Mammary epithelial cell (primary cell): ENCODE measurements at regions of chr19 and their contacts with region 1.

Region 1: GRCh38 chr19:1720237-1720636 is 33.1 kb upstream of the ONECUT3 start:
- DNase-seq: no peak
- H3K4me3 ChIP-seq: no peak overlapping the region
- H3K27ac ChIP-seq: no peak overlapping the region
- H3K4me1 ChIP-seq: peaks cover 4% of the 10 kb centered on the region
- H3K27me3 ChIP-seq: peaks cover 4% of the 10 kb centered on the region
- CTCF ChIP-seq: no peak

Region 2: GRCh38 chr19:1632462-1633268 is 87.6 kb before region 1 on chr19:
- CTCF ChIA-PET with region 1: no interaction called
- dilution Hi-C with region 1: loop called (anchors 5 kb)
- in situ Hi-C with region 1: no loop called
- intact Hi-C with region 1: no loop called
- DNase-seq: no peak
- H3K4me3 ChIP-seq: no peak overlapping the region
- H3K27ac ChIP-seq: no peak overlapping the region
- H3K4me1 ChIP-seq: no peaks in the 10 kb centered on the region
- H3K27me3 ChIP-seq: no peaks in the 10 kb centered on the region
- CTCF ChIP-seq: no peak

Region 3: DNA sequence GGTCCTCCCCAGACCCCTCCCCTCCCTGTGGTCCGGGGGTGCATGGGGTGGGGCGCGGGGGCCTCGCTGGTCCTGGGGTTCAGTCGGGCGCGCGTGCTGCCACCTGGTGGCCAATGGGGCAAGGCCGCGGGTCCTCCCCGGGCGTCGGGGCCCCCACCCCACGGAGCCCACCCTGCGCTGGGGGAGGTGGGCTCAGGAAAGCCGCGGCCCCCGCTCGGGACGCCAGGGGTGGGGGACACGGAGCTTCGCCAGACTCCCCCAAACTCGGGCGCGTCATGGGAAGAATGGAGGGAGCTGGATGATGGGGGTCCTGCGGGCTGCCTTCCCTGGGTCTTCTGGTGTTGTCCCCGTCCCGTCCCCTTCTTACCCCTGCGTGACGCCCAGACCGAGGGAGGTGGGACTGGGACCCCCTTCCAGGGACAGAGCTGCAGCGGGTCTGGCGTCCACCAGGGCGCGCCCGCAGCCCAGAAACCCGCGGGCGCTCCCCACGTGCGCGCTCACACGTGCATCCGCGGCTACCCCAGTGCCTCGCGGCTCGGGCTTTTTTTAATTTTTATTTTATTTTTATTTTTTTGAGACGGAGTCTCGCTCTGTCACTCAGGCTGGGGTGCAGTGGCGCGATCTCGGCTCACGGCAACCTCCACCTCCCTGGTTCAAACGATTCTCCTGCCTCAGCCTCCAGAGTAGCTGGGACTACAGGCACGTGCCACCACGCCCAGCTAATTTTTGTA is 48.0 kb before region 1 on chr19:
- CTCF ChIA-PET with region 1: no interaction called
- dilution Hi-C with region 1: no loop called
- in situ Hi-C with region 1: no loop called
- intact Hi-C with region 1: no loop called
- DNase-seq: no peak
- H3K4me3 ChIP-seq: peak overlapping the region in 2 of 3 experiments; percentile 6 to 49
- H3K27ac ChIP-seq: no peak overlapping the region
- H3K4me1 ChIP-seq: peaks cover 11% of the 10 kb centered on the region
- H3K27me3 ChIP-seq: peaks cover 8% of the 10 kb centered on the region
- CTCF ChIP-seq: peak; percentile 62 to 74

Region 4: GRCh38 chr19:1767464-1767933 is 47.3 kb after region 1 on chr19:
- CTCF ChIA-PET with region 1: no interaction called
- dilution Hi-C with region 1: no loop called
- in situ Hi-C with region 1: no loop called
- intact Hi-C with region 1: no loop called
- DNase-seq: no peak
- H3K4me3 ChIP-seq: no peak overlapping the region
- H3K27ac ChIP-seq: no peak overlapping the region
- H3K4me1 ChIP-seq: peaks cover 10% of the 10 kb centered on the region
- H3K27me3 ChIP-seq: peaks cover 24% of the 10 kb centered on the region
- CTCF ChIP-seq: peak; percentile 79 to 91

Region 5: GRCh38 chr19:2199215-2199614 is 479.0 kb after region 1 on chr19:
- CTCF ChIA-PET with region 1: no interaction called
- dilution Hi-C with region 1: no loop called
- in situ Hi-C with region 1: no loop called
- intact Hi-C with region 1: no loop called
- DNase-seq: no peak
- H3K4me3 ChIP-seq: no peak overlapping the region
- H3K27ac ChIP-seq: no peak overlapping the region
- H3K4me1 ChIP-seq: no peaks in the 10 kb centered on the region
- H3K27me3 ChIP-seq: no peaks in the 10 kb centered on the region
- CTCF ChIP-seq: peak in 1 of 2 donors; percentile 2